Cardiac septum (tissue), 1 donor: ENCODE measurements at regions of chr18 and their contacts with region 1.

Region 1: DNA sequence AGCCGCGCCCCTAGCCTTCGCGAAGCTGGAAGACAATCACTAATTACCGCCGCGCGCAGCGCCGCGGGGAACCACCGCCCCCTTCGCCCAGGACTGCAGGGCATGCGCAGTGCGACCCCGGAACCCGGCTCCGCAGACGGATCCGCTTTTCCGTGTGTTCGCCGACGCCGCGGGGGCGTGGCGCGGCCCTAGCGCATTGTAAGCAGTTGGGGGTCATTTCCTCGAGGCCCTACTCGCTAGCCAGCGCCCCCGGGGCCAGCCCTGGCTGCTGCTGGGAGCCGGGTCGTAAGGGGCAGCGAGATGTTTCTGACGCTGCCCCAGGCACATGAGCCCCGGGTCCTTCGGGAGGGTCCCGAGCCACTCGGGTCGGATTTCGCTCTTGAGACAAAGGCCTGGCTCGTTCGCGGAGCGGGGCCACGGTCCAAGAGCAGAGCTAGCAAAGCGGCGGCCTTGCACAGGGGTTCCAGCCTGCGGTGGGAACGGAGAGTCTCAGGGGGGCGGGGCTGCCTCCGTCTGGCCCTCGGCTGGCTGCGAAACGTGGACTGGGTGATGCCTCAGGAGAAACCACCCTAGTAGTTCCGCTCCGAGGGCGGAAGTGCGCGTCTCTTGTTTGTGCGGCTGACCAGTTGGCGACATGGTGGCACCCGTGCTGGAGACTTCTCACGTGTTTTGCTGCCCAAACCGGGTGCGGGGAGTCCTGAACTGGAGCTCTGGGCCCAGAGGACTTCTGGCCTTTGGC is at the starts of genes ELP2 and SLC39A6:
- DNase-seq: peak; percentile 99
- total RNA-seq, gene ELP2: 50.4 TPM
- total RNA-seq, gene SLC39A6: 15.6 TPM

Region 2: GRCh38 chr18:35972197-35973052 is 157.0 kb before region 1 on chr18 and contains the start of gene RMP24:
- intact Hi-C with region 1: no loop called
- DNase-seq: peak; percentile 97

Region 3: DNA sequence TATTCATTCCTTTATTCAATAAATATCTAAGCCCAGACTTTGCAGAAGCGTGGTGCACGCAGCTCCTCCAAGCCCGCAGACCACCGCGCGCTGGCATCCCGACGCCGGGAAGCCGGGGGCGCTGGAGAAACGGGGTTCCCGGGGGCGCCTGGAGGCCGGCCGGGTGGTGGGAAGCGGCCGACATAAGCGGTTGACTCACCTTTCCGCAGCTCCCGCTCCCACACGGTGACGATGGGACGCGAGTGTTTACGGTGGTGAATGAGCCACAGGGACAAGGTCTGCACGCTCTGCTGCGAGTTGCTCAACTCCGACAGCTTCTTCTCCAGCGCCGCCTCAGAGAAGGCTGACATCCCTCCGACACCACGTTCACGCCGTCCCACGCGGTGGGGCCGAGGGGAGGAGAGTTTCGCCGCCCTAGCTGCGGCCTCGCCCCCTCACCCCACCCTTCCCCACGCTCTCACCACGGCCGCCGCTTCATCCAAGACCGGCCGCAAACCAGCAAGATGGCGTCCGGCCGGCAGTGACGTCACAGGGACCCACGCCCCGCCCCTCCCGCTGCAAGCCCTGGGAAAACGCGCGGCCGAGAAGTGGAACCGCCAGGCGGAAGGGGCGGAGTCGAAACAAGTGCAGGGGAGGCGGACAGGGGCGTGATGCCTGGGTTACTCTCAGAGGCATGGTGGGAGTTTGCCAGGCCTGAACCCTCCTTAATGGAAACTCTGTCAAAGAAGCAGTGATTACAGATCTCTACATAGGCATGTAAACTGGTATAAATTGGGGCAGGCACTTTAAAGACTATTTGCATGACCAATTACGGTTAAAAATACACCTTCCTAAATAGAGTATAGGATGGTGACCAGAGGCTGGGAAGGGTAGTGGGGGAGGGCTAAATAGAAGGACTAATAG is 62.2 kb before region 1 on chr18 and contains the start of gene RPRD1A:
- intact Hi-C with region 1: loop called (anchors 2 kb)
- DNase-seq: peak; percentile 99
- total RNA-seq, gene RPRD1A: 50.7 TPM

Region 4: DNA sequence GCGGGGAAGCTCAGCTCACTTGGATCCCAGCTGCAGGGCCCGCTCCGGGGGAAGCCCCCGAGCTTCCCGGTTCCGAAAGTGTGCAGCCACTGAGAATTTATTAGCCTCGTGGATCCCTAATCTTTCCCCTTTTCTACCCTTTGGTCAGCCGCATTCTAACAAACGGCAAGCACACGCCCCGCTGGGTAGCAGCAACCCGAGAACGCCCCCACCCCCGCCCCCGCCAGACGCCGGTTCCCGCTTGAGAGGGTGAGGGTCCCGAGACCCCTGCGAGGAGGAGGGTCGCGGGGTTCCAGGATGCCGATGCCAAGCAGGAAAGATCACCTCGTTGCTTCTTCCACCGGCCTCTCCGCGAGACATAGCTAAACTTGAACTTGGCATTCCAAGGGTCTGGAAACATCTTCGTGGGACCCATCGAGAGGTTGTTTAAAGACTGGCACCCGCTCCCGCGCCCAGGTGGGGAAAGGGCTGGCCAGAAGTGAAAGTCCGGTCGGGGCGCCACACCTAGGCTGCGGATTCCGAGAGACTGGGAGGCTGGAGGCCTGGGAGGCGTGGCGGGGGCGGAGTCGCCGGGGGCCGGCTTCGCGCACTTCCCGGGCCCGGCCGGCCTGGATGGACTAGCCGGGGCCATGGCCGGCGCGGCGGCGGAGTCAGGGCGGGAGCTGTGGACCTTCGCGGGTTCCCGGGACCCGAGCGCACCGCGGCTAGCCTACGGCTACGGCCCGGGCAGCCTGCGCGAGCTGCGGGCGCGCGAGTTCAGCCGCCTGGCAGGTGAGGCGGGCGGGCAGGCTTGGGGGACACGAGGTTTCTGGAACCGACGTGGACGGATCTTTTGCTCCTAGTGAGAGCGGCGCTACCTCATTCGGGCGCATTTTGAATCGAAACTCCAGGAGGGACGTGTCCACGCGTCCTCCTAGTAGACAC is 57.7 kb after region 1 on chr18 and contains the start of gene MOCOS:
- intact Hi-C with region 1: loop called (anchors 5 kb)
- DNase-seq: peak; percentile 85
- total RNA-seq, gene MOCOS: 0.38 TPM

Region 5: DNA sequence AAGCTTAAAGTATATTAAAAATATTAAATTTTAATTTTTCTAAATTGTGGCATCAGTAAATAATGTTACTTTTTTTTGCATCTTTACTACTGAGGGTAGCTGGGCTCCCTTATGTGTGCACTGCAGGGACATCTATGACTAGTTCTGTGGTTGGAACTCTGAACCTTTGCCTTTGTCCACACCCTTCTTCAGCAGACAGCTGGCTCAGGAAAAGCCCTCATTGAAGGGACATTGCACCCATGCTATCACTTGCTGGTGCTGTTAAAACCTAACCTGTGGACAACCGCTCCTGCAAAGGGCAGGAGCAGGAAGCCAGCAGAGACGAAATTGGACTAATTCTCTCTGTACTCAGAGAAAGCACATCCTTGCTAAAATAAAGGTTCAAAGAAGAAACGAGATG is 87.9 kb after region 1 on chr18:
- intact Hi-C with region 1: no loop called
- DNase-seq: no peak

Region 6: DNA sequence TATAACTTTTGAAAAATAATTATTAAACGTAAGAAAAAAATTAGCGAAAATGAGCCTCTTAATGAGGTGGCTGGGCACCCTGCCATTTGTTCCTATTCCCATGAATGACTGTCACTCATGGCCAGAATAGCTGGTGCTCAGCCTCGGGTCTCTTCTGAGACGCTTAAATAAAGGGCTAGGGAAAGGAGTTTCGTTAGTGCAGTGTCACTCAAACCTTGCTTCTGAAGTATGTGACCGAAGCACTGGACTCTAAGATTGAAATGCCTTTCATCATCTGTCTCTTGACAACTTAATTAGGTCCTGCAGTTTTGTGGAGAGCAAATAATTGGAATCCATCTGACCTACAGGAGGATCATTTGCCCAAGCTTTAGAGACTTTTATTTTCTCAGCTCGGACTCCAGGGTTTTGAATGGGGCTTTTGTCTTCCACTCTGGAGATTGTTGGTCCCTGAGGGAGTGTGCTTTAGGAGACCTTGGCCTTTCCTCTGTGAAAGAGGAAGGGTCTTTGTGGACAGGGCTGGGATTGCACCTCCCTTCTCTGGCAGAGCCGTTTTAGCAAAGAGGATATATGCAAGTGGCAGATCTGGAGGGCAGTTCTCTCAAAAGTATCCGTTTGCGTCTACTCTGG is 125.7 kb after region 1 on chr18:
- intact Hi-C with region 1: no loop called
- DNase-seq: no peak